ENCODE measurements at regions of chr7 and their contacts with region 1.

Region 1: DNA sequence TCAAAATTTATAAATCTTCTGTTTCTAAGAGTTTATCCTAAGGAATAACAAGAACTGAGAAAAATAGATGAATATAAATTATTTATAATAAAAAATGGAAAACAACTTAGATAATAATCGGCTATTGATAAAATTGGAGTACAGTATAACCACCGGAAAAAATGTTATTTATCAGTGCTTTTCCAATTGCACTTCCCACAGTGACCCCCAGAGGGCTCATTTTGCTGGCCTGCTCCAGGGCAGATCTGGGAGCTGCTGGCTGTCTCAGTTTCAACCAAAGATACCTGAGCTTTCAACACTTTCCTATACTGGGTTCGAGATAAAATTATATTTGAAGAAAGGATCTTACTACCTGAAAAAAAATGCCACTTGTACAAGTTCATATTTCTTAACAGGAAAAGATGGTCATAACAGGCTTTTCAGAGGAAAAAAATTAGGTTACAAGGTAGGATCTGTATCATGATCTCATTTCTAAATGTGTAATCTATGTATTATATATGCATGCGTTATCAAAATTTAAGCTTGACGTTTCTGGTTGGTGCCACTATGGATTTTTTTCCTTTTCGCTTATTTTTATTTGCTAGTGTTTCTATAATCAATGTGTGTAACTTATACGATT is 165.7 kb downstream of the NPSR1 start:
- DNase-seq: peak; percentile 70
- ATAC-seq: peak; percentile 61
- H3K4me3 Mint-ChIP-seq: no peak overlapping the region
- H3K27ac Mint-ChIP-seq: no peak overlapping the region
- H3K4me1 Mint-ChIP-seq: no peaks in the 10 kb centered on the region
- H3K27me3 Mint-ChIP-seq: no peaks in the 10 kb centered on the region
- CTCF ChIP-seq: peak; percentile 86

Region 2: DNA sequence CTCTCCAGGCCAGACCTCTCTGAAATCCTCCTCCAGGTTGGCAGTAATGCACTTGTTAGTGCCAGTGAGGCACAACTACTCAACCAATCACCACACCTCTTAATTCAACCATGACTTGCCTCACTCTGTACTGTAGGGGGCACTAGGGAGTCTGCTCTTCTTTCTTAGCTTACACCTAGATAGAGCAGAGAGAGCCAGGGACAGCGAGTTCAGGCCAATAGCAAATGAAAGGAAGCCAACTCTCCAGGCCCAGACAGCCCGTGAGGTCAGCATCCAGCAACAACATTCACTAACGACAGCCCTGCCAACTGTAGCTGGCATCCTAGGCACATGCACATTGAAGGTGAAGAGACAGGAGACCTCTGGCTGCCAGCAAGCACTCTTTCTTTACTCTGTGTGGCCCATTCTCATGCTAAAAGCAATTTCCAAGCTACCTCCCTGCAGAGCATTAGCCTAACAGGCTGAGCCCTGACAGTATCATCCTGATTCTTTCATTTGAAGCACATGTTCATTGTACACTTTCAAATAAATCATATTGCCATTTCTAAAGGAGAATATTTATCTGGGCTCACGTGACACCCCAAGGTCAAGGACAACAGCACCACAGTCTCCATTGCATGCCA is 77.3 kb after region 1 on chr7:
- CTCF ChIA-PET with region 1: no interaction called
- POLR2A ChIA-PET with region 1: no interaction called
- intact Hi-C with region 1: no loop called
- DNase-seq: no peak
- ATAC-seq: peak; percentile 72
- H3K4me3 Mint-ChIP-seq: no peak overlapping the region
- H3K27ac Mint-ChIP-seq: no peak overlapping the region
- H3K4me1 Mint-ChIP-seq: no peaks in the 10 kb centered on the region
- H3K27me3 Mint-ChIP-seq: peaks cover 4% of the 10 kb centered on the region
- CTCF ChIP-seq: peak; percentile 35

Region 3: GRCh38 chr7:34928049-34928448 is 104.3 kb after region 1 on chr7:
- CTCF ChIA-PET with region 1: interaction called, 4 read pairs
- POLR2A ChIA-PET with region 1: no interaction called
- intact Hi-C with region 1: loop called (anchors 10 kb)
- DNase-seq: peak; percentile 71
- ATAC-seq: peak; percentile 39
- H3K4me3 Mint-ChIP-seq: no peak overlapping the region
- H3K27ac Mint-ChIP-seq: no peak overlapping the region
- H3K4me1 Mint-ChIP-seq: no peaks in the 10 kb centered on the region
- H3K27me3 Mint-ChIP-seq: no peaks in the 10 kb centered on the region
- CTCF ChIP-seq: peak; percentile 76

Region 4: DNA sequence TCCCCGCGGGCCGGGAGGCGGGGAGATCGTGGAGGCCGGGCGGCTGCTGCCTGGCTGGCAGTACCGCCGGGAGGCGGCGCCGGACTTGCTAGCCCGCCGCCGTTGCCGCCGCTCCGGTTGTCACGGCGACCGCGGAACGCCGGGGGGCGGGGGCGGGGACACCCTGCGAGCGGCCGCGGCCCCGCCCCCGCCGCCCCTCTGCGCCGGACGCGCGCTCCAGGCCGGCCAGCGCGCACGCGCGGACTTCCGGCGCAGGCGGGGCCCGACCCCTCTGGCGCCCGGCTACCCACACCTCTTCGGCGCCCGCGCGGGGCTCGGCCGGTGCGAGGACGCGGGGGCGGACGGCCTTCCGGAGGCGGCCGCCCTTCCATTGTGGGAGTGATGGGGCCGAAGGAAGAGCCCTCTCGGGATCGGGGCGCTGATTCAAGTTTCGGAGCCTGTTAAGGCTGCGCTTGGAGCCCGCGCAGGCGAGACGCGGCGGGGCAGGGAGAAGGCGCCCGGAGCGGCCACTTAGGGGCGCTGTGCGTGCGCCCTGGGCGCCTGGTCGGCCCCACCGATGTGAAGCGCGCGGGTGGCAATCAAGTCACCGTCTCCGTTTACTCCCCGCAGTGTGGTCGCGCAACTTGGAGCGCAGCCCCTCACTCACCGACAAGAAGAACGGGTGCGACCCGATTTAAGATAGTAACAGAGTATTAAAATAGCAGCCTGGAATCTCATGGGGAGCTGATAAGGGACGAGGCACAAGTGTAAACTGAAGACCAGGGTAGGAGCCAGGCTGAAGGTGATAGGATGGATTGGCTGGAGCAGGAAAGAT is 214.0 kb after region 1 on chr7:
- CTCF ChIA-PET with region 1: no interaction called
- POLR2A ChIA-PET with region 1: no interaction called
- intact Hi-C with region 1: loop called (anchors 5 kb)
- DNase-seq: peak; percentile 91
- ATAC-seq: peak; percentile 78
- H3K4me3 Mint-ChIP-seq: peak overlapping the region; percentile 77
- H3K27ac Mint-ChIP-seq: peak overlapping the region; percentile 82
- H3K4me1 Mint-ChIP-seq: peaks cover 26% of the 10 kb centered on the region
- H3K27me3 Mint-ChIP-seq: no peaks in the 10 kb centered on the region
- CTCF ChIP-seq: peak; percentile 76

Measured in activated CD8-positive, alpha-beta T cell treated with anti-CD3 and anti-CD28 coated beads for 36 hours (primary cell).